K562 (cell line): ENCODE measurements at regions of chr1 and their contacts with region 1.

Region 1: GRCh38 chr1:185373813-185374529 is 56.9 kb upstream of the IVNS1ABP start:
- DNase-seq: no peak
- ATAC-seq: peak; percentile 28; the same call in 2 of the 3 replicates
- H3K4me3 ChIP-seq: no peak overlapping the region
- H3K27ac ChIP-seq: no peak overlapping the region
- H3K4me1 ChIP-seq: no peaks in the 10 kb centered on the region
- H3K27me3 ChIP-seq: peaks cover 0 to 9% of the 10 kb centered on the region in 2 experiments; a peak in 3 of 5 replicates
- CTCF ChIP-seq: no peak
- EP300 ChIP-seq: no peak
- POLR2A ChIP-seq: no peak
- RAD21 ChIP-seq: no peak

Region 2: GRCh38 chr1:185244015-185244747 is 129.8 kb before region 1 on chr1:
- CTCF ChIA-PET with region 1: no interaction called
- POLR2A ChIA-PET with region 1: no interaction called
- in situ Hi-C with region 1: no loop called
- intact Hi-C with region 1: no loop called
- DNase-seq: peak in 1 of 4 experiments; percentile 37
- ATAC-seq: peak; percentile 55; the same call in 2 of the 3 replicates
- H3K4me3 ChIP-seq: no peak overlapping the region
- H3K27ac ChIP-seq: no peak overlapping the region
- H3K4me1 ChIP-seq: peaks cover 0 to 16% of the 10 kb centered on the region in 2 experiments; a peak in 3 of 5 replicates
- H3K27me3 ChIP-seq: no peaks in the 10 kb centered on the region
- CTCF ChIP-seq: no peak
- EP300 ChIP-seq: no peak
- POLR2A ChIP-seq: no peak
- RAD21 ChIP-seq: no peak

Region 3: GRCh38 chr1:185385991-185386390 is 12.0 kb after region 1 on chr1:
- CTCF ChIA-PET with region 1: no interaction called
- POLR2A ChIA-PET with region 1: interaction called, 10 read pairs
- in situ Hi-C with region 1: no loop called
- intact Hi-C with region 1: no loop called
- DNase-seq: no peak
- ATAC-seq: no peak
- H3K4me3 ChIP-seq: no peak overlapping the region
- H3K27ac ChIP-seq: no peak overlapping the region
- H3K4me1 ChIP-seq: peaks cover 0 to 12% of the 10 kb centered on the region in 2 experiments; a peak in 3 of 5 replicates
- H3K27me3 ChIP-seq: no peaks in the 10 kb centered on the region
- CTCF ChIP-seq: no peak
- EP300 ChIP-seq: no peak
- POLR2A ChIP-seq: no peak
- RAD21 ChIP-seq: no peak